ENCODE measurements at regions of chr10 and their contacts with region 1.

Region 1: DNA sequence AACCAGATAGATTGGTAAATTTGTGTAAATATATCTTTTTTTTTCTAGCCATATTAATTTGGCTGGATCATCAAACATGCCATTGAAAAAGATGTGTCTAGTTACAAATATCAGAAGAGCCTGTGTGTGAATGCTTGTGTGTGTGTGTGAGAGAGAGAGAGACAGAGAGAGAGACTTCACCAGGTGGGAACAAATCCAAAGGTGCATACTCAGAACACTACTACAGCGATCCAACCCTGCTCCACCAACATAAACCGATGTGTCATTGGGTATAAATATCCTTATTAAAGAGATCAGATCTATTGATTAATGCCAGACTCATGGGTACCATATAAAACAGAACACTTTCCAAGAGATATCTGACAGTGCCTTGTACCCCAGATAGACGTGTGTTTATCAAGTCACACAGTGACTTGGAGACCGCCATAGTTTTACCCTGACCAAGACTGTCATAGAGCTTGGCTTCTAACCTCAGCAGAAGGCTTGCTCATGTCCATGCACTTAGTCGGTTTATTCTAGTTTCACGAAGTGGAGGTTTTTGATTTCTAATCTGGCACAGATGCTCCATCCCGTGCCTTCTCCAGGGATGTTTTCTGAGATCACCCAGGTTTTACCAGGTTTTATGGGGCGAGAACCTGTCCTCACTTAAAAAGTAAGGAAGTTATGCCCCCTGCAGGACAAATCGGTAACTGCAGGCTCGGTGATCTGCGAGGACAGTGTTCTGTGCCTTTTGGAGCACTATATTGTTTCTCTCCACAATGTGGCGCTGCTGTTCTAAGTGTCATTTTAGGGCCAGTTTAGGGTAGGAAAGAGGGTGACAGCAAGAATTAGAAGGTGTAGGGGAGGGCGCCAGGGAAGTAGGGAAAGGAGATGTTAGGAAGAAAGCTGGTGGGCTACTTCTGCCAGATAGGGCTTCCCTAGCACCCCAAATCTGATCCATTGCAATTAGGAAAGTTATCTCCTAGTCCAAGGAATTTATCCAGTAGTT is 29.3 kb upstream of the WNT8B start:
- DNase-seq: peak; percentile 99
- ATAC-seq: peak; percentile 96
- H3K4me3 Mint-ChIP-seq: no peak overlapping the region
- H3K27ac Mint-ChIP-seq: no peak overlapping the region
- H3K4me1 Mint-ChIP-seq: peaks cover 15% of the 10 kb centered on the region
- H3K27me3 Mint-ChIP-seq: no peaks in the 10 kb centered on the region

Region 2: GRCh38 chr10:100303724-100304319 is 129.7 kb before region 1 on chr10:
- CTCF ChIA-PET with region 1: interaction called, 13 read pairs
- POLR2A ChIA-PET with region 1: no interaction called
- DNase-seq: no peak
- ATAC-seq: no peak
- H3K4me3 Mint-ChIP-seq: no peak overlapping the region
- H3K27ac Mint-ChIP-seq: no peak overlapping the region
- H3K4me1 Mint-ChIP-seq: no peaks in the 10 kb centered on the region
- H3K27me3 Mint-ChIP-seq: peaks cover 45% of the 10 kb centered on the region

Region 3: DNA sequence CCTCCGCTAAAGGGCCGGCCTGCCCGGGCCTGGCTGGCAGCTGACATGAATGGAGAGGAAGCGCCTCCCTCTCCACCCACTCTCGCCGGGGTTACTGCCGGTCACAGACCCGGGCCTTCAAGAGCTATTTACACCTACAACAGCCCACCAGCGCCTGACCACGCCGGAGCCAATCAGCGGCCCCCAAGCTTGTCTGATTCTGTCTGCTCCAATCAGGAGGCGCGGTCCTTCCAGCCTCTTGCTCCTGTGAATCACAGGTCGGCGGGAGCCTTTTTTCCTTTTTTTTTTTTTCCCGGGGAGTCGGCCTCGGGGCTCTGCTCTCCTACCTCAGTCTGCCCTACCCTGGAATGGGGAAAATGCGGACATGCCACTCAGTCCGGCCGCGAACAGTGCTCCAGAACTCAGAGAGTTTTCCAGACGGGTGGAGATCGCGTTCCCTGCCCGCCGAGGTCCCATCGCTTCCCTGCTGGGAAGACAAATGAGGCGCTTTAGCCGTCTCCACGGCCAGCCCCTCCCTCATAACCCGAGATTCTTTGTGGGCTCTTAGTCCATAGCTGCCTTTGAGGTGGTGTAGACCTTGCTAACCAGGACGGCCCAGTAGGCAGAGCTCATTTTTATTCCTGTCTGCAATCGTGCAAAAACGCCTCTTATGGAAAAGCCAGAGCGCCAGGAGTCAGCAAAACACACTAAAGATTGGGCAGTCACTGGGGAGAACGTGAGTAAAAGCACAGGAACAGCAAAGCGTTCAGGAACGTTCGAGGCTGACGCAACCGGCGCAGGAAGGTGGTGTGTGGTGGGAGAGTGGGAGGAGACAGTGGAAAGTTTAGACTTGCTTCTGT is 60.0 kb before region 1 on chr10:
- CTCF ChIA-PET with region 1: interaction called, 12 read pairs
- POLR2A ChIA-PET with region 1: no interaction called
- DNase-seq: peak; percentile 96
- ATAC-seq: peak; percentile 83
- H3K4me3 Mint-ChIP-seq: no peak overlapping the region
- H3K27ac Mint-ChIP-seq: no peak overlapping the region
- H3K4me1 Mint-ChIP-seq: peaks cover 50% of the 10 kb centered on the region
- H3K27me3 Mint-ChIP-seq: no peaks in the 10 kb centered on the region

Region 4: DNA sequence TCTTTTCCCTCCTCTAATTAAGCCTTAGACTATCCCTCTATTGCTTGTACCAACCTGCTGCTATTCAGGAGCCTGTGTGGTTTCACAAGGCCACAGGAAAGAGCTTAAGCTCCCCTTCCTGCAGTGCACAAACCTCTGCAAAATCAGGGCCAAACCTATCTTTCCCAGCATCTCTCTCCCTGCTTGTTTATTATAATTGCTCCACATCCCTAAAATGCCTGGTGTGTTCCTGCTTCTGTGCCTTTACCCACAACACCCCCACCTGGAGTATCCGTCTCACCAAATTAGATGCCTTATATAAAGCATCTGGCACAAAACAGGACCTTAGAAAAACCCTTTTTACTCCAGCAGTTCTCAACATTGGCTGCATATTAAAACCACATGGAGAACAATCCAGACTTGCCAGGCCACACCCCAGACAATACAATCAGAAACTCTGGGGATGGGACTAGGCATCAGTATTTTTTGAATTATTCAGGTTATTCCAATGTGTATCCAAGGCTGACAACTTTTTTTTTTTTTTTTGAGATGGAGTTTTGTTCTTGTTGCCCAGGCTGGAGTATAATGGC is 69.5 kb after region 1 on chr10:
- CTCF ChIA-PET with region 1: interaction called, 165 read pairs
- POLR2A ChIA-PET with region 1: interaction called, 13 read pairs
- DNase-seq: no peak
- ATAC-seq: no peak
- H3K4me3 Mint-ChIP-seq: no peak overlapping the region
- H3K27ac Mint-ChIP-seq: peak overlapping the region; percentile 77
- H3K4me1 Mint-ChIP-seq: peaks cover 89% of the 10 kb centered on the region
- H3K27me3 Mint-ChIP-seq: no peaks in the 10 kb centered on the region

Region 5: GRCh38 chr10:100535715-100536353 is 102.3 kb after region 1 on chr10 and contains the start of gene HIF1AN:
- CTCF ChIA-PET with region 1: interaction called, 10 read pairs
- POLR2A ChIA-PET with region 1: interaction called, 5 read pairs
- DNase-seq: peak; percentile 94
- ATAC-seq: peak; percentile 98
- H3K4me3 Mint-ChIP-seq: no peak within 1 kb of the TSS
- H3K27ac Mint-ChIP-seq: peak within 1 kb of the TSS; percentile 21
- H3K4me1 Mint-ChIP-seq: peaks cover 14% of the 10 kb centered on the region
- H3K27me3 Mint-ChIP-seq: no peaks in the 10 kb centered on the region
- total RNA-seq, gene HIF1AN: 46.5 to 48.1 TPM

Measured in activated CD8-positive, alpha-beta T cell treated with anti-CD3 and anti-CD28 coated beads, Interleukin-2, amount 10 ng/mL, durations not matched to agents 7 days and 5 days (primary cell).